Left ventricle myocardium inferior (tissue), 1 donor: ENCODE measurements at regions of chr2 and their contacts with region 1.

Region 1: GRCh38 chr2:207149249-207150213 is 16.2 kb downstream of the KLF7 start:
- DNase-seq: peak; percentile 28
- H3K4me3 ChIP-seq: peak overlapping the region; percentile 20
- H3K27ac ChIP-seq: peak overlapping the region; percentile 100
- H3K4me1 ChIP-seq: peaks cover 100% of the 10 kb centered on the region
- H3K27me3 ChIP-seq: no peaks in the 10 kb centered on the region
- CTCF ChIP-seq: no peak

Region 2: GRCh38 chr2:207083361-207084110 is 66.0 kb before region 1 on chr2:
- intact Hi-C with region 1: loop called (anchors 10 kb)
- DNase-seq: no peak
- H3K4me3 ChIP-seq: no peak overlapping the region
- H3K27ac ChIP-seq: peak overlapping the region; percentile 87
- H3K4me1 ChIP-seq: peaks cover 67% of the 10 kb centered on the region
- H3K27me3 ChIP-seq: no peaks in the 10 kb centered on the region
- CTCF ChIP-seq: no peak

Region 3: GRCh38 chr2:207200136-207200535 is 50.6 kb after region 1 on chr2:
- intact Hi-C with region 1: no loop called
- DNase-seq: no peak
- H3K4me3 ChIP-seq: no peak overlapping the region
- H3K27ac ChIP-seq: no peak overlapping the region
- H3K4me1 ChIP-seq: no peaks in the 10 kb centered on the region
- H3K27me3 ChIP-seq: no peaks in the 10 kb centered on the region
- CTCF ChIP-seq: no peak